A673 (cell line): ENCODE measurements at regions of chr3 and their contacts with region 1.

Region 1: DNA sequence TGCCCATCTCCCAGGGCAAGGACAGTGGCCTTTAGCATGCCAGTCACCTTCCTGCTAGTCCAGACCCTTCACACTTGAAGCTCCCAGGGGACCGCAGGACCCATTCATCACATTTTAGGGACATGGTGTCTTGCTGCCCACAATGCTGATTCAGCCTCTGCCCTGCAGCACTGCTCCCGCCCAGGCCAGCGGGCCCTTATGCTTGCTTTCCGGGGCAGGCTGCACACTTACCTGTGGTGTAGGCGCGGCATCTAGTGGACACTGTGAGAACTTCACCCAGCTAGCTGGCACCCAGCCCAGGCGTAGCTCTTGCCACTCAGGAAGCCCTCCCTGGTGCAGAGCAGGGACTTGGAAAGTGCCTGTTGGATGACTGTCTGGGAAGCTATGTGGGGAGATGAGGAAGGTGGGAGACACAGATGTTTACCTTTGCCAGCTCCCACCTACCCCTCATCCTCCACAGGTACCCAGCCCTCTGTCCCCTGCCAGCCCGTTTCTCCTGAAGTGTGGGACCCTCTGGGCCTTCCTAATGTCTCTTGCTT is 26.2 kb upstream of the NR2C2 start:
- DNase-seq: peak; percentile 90
- H3K4me3 ChIP-seq: no peak overlapping the region
- H3K27ac ChIP-seq: no peak overlapping the region
- H3K4me1 ChIP-seq: no peaks in the 10 kb centered on the region
- H3K27me3 ChIP-seq: no peaks in the 10 kb centered on the region
- CTCF ChIP-seq: peak; percentile 95

Region 2: DNA sequence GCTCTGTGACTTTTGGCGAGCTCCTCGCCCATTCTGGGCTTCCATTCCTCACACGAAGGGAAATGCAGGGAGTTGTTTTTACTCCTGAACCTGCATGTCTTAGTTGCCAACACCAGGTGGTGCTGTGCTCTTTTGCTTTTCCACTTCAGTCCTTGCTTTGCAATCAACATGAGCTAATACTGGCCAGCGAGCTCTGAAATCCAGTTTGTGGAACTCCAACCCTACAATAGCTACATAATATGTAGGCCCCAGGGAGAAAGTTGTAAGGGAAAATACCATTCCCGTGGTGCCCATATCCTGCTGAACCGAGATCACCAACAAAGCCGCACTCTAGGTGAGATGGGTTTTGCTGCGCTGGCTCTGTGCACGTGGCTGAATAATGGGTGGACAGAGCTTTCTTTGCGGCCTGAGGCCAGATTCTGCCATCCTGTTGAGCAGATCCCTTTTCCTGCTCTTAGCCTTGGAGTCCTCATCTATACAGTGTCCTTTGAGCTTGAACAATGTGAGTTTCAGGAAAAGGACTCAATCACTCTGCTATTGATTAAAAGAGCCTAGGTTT is 717.5 kb before region 1 on chr3:
- CTCF ChIA-PET with region 1: interaction called, 6 read pairs
- POLR2A ChIA-PET with region 1: no interaction called
- intact Hi-C with region 1: loop called (anchors 5 kb)
- DNase-seq: peak; percentile 76
- H3K4me3 ChIP-seq: no peak overlapping the region
- H3K27ac ChIP-seq: no peak overlapping the region
- H3K4me1 ChIP-seq: no peaks in the 10 kb centered on the region
- H3K27me3 ChIP-seq: no peaks in the 10 kb centered on the region
- CTCF ChIP-seq: peak; percentile 89

Region 3: GRCh38 chr3:14508961-14509795 is 412.0 kb before region 1 on chr3:
- CTCF ChIA-PET with region 1: no interaction called
- POLR2A ChIA-PET with region 1: no interaction called
- intact Hi-C with region 1: loop called (anchors 5 kb)
- DNase-seq: peak; percentile 73
- H3K4me3 ChIP-seq: no peak overlapping the region
- H3K27ac ChIP-seq: no peak overlapping the region
- H3K4me1 ChIP-seq: no peaks in the 10 kb centered on the region
- H3K27me3 ChIP-seq: no peaks in the 10 kb centered on the region
- CTCF ChIP-seq: peak; percentile 90

Region 4: DNA sequence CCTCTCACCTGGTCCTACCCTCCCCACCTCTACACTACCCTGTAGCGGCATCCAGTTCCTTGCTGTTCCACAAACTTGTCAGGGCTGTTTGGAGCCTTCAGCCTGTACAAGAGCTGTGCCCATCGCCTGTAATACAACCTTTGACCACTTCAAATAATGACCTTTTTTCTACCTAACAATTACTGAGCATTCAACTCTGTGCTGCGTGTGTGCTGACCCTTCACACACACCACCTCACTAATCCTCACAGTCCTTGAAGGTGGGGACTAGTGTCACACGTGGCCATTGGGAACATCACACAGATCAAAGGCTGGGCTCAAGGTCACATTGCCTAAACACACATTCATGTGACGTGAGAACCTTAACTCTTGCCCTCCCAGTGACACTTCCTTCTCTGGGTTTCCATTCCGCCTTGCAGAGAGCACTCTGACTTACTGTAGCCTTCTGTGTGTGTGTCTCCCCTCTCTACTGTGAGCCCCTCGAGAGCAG is 243.1 kb before region 1 on chr3:
- CTCF ChIA-PET with region 1: interaction called, 20 read pairs
- POLR2A ChIA-PET with region 1: no interaction called
- intact Hi-C with region 1: loop called (anchors 1 kb)
- DNase-seq: no peak
- H3K4me3 ChIP-seq: no peak overlapping the region
- H3K27ac ChIP-seq: no peak overlapping the region
- H3K4me1 ChIP-seq: no peaks in the 10 kb centered on the region
- H3K27me3 ChIP-seq: no peaks in the 10 kb centered on the region
- CTCF ChIP-seq: no peak

Region 5: DNA sequence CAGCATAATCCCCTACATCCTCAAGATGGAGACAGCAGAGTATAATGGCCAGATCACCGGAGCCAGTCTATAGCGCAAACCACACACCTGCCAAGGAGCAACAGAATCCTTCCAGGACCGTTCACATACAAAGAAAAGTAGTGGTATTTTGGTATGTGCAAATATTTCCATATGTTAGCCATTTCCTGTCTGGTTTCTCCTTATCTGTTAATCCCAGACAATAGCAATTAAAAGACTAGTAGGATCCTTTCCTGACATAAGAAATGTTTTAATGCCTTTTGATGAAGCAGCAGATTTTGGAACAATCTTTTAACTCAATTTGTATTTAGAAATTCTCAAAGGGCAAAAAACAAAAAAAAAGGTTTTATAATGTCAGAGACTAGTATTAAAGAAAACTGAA is 121.8 kb after region 1 on chr3:
- CTCF ChIA-PET with region 1: no interaction called
- POLR2A ChIA-PET with region 1: no interaction called
- intact Hi-C with region 1: loop called (anchors 5 kb)
- DNase-seq: peak; percentile 66
- H3K4me3 ChIP-seq: no peak overlapping the region
- H3K27ac ChIP-seq: peak overlapping the region; percentile 53
- H3K4me1 ChIP-seq: peaks cover 33% of the 10 kb centered on the region
- H3K27me3 ChIP-seq: no peaks in the 10 kb centered on the region
- CTCF ChIP-seq: no peak